ENCODE measurements at regions of chr21 and their contacts with region 1.

Region 1: DNA sequence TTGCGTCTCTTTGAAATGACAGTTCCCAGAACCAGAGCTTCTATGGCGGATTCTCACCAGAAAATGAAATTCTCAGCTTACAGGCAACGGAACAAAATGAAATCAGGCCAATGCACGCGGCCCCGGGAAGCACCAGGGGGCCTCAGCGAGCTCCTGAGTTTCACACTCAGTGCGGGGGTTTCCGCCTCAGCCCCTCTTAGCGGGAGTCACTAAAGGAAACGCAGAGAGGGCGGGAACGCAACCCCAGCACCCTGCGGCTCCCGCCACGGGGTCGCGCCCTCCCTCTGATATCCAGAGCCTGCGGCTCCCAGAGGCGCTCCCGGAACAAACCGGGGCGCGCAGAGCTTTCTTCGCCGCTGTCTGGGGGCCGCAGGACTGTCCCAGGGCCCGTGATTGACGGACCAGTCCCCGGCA is 7.9 kb upstream of the COL6A1 start:
- DNase-seq: no peak
- H3K4me3 ChIP-seq: peak overlapping the region; percentile 42 to 71 (median 60)
- H3K27ac ChIP-seq: no peak overlapping the region
- H3K4me1 ChIP-seq: peaks cover 0 to 29% (median 17%) of the 10 kb centered on the region in 4 experiments; a peak in 6 of 7 replicates
- H3K27me3 ChIP-seq: peaks cover 0 to 23% (median 11%) of the 10 kb centered on the region in 4 experiments; a peak in 4 of 7 replicates
- CTCF ChIP-seq: peak in 2 of 3 experiments; percentile 20 to 45; a peak in 2 of 4 replicates
- EP300 ChIP-seq: no peak
- POLR2A ChIP-seq: no peak
- RAD21 ChIP-seq: peak; percentile 21 to 37; a peak in 3 of 4 replicates

Region 2: DNA sequence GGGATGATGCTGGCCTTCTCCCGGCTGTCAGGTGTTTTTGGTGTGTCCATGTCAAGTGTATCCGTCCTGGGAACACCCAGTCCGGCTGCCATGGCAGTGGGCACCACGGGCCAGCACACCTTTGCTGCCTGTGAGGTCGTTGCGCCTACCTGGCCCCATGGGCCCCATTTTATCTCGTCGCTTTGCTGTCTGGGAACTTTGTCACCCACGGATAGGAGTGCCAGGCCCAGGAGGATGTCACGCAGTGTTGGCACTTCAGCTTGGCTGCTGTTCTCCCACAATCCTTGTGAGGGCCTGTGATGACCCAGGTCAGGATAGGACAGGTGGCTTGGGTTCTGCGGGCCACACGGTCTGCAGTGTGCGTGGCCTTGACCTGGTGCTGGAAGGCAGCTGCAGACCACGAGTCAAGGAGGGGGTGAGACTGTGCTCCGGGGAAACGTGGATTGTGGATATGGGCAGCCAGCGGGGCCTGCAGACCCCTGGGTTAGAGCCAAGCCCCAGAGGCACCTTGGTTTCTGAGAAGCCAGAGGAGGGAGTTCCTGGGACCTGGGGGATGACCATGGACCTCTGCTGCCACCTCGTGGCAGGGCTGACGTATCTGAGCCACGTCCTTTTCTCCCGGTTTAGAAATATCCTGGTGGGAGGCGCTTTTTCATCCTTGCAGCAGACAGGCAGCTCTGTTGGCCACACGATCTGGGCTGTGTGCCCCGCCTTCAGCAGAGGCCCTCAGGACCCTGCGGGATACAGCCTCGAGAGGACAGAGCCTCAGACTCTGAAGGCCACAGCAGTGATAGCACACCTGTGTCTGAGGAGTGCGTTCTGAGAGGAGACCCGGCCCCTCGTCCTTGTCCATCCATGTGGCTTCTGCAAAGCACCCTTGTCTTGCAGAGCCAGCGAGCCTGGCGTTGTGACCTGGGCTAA is 153.2 kb before region 1 on chr21:
- CTCF ChIA-PET with region 1: no interaction called
- POLR2A ChIA-PET with region 1: no interaction called
- DNase-seq: peak; percentile 85 to 89
- H3K4me3 ChIP-seq: no peak overlapping the region
- H3K27ac ChIP-seq: no peak overlapping the region
- H3K4me1 ChIP-seq: peaks cover 0 to 8% (median 1%) of the 10 kb centered on the region in 4 experiments; a peak in 2 of 7 replicates
- H3K27me3 ChIP-seq: no peaks in the 10 kb centered on the region
- CTCF ChIP-seq: peak; percentile 84 to 97 (median 90)
- EP300 ChIP-seq: no peak; a peak in 1 of 3 replicates
- POLR2A ChIP-seq: no peak
- RAD21 ChIP-seq: peak; percentile 96 to 97

Region 3: GRCh38 chr21:45954261-45954660 is 19.4 kb before region 1 on chr21:
- CTCF ChIA-PET with region 1: interaction called, 20 read pairs
- POLR2A ChIA-PET with region 1: no interaction called
- DNase-seq: no peak
- H3K4me3 ChIP-seq: no peak overlapping the region
- H3K27ac ChIP-seq: no peak overlapping the region
- H3K4me1 ChIP-seq: no peaks in the 10 kb centered on the region; a peak in 1 of 7 replicates
- H3K27me3 ChIP-seq: no peaks in the 10 kb centered on the region
- CTCF ChIP-seq: peak; percentile 15 to 47 (median 31); a peak in 2 of 4 replicates
- EP300 ChIP-seq: no peak
- POLR2A ChIP-seq: no peak
- RAD21 ChIP-seq: peak; percentile 24 to 39; a peak in 3 of 4 replicates

Region 4: DNA sequence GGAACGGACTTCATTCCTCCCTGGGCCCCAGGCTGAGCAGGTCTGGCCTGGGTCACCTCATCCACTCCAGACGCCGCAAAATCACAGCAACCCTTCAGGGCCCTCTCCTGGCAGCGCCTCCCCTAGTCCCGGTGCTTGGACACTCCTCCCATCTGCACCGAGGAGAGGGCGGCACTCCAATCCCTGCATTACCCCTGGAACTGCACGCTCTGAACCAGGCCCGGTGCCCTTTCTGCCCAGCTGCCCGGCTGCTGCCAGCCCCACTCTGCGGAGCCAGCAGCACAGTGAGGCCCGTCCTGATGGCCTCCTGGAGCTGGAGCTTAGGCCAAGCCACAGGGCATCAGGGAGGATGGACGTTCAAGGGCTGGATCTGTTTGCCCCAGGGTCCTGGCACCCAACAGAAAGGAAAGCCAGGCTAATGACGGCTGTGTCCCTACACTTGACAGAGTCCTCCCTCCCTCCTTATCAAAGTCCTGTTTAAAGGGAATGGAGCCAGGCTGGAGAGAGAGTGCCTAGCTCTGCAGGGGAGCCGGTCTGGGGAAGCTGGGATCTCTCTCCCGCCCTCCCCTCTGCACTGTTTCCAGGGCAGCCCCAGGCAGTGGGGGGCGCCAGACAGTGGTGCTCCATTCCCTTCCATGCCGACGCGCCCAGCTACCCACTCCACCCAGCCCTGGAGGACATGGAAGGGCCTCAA is 137.0 kb after region 1 on chr21:
- CTCF ChIA-PET with region 1: interaction called, 19 read pairs
- POLR2A ChIA-PET with region 1: no interaction called
- DNase-seq: peak in 1 of 2 experiments; percentile 52
- H3K4me3 ChIP-seq: no peak overlapping the region
- H3K27ac ChIP-seq: no peak overlapping the region
- H3K4me1 ChIP-seq: peaks cover 0 to 2% (median under 1%) of the 10 kb centered on the region in 4 experiments; a peak in 2 of 7 replicates
- H3K27me3 ChIP-seq: no peaks in the 10 kb centered on the region
- CTCF ChIP-seq: peak in 2 of 3 experiments; percentile 16 to 24; a peak in 2 of 4 replicates
- EP300 ChIP-seq: no peak
- POLR2A ChIP-seq: no peak
- RAD21 ChIP-seq: peak; percentile 47 to 53

Region 5: DNA sequence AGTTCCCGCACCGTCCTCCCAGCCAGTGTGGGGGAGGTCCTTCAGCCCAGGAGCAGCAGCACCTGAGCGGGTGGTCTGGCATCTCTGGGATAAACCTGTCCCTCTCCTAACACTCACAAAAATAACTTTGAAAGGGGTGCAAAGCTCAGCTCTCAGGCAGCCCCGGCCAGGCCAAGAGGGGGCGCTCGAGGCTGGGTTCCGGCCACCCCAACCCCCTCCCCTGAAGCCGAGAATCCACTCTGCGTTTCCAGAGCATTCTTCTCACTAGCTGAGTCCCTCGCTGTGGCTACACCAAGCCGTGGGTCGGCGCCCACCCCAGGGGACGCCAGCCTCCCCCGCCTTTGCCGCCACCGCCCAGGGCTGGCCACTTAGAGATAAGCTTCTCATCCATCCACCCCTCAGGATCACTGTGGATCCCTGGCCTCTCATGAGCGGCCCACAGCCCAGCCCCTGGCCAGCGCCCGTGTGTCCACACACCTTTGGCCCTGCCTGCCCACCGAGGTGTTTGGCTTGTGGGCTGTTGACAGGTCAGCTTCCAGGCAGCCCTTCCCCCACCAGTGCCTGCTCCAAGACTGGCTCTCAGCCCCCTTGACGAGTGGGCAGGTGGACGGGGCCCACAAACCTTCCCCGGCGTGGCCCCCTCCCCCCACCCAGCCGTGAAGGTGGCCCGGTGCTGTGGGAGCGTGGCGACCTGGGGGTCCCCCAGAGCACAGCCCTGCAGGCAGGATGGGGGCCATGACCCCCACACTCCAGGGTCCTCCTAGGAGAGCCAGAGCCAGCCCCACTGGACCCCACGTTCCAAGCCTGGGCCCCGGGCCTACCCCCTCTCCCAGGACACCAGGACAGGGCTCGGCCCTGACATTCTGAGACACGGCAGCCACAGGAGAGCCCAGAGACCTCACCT is 179.8 kb after region 1 on chr21:
- CTCF ChIA-PET with region 1: interaction called, 11 read pairs
- POLR2A ChIA-PET with region 1: no interaction called
- DNase-seq: peak; percentile 29 to 95
- H3K4me3 ChIP-seq: no peak overlapping the region; a peak in 1 of 8 replicates
- H3K27ac ChIP-seq: no peak overlapping the region; the same call in 1 of the 2 replicates
- H3K4me1 ChIP-seq: peaks cover 0 to 24% (median 15%) of the 10 kb centered on the region in 4 experiments; a peak in 5 of 7 replicates
- H3K27me3 ChIP-seq: no peaks in the 10 kb centered on the region
- CTCF ChIP-seq: peak in 2 of 3 experiments; percentile 75 to 83; a peak in 3 of 4 replicates
- EP300 ChIP-seq: no peak
- POLR2A ChIP-seq: no peak
- RAD21 ChIP-seq: peak; percentile 60 to 69; a peak in 3 of 4 replicates

Measured in H1 (cell line).